Activated CD4-positive, alpha-beta T cell treated with anti-CD3 and anti-CD28 coated beads, Interleukin-2, amount 10 ng/mL, durations not matched to agents 24 days and 14 days (primary cell): ENCODE measurements at regions of chr17 and their contacts with region 1.

Region 1: GRCh38 chr17:48413613-48414405 is 16.2 kb downstream of the SKAP1 start:
- DNase-seq: no peak
- H3K4me3 Mint-ChIP-seq: peak overlapping the region; percentile 55
- H3K27ac Mint-ChIP-seq: peak overlapping the region; percentile 78
- H3K4me1 Mint-ChIP-seq: peaks cover 66% of the 10 kb centered on the region
- H3K27me3 Mint-ChIP-seq: no peaks in the 10 kb centered on the region

Region 2: DNA sequence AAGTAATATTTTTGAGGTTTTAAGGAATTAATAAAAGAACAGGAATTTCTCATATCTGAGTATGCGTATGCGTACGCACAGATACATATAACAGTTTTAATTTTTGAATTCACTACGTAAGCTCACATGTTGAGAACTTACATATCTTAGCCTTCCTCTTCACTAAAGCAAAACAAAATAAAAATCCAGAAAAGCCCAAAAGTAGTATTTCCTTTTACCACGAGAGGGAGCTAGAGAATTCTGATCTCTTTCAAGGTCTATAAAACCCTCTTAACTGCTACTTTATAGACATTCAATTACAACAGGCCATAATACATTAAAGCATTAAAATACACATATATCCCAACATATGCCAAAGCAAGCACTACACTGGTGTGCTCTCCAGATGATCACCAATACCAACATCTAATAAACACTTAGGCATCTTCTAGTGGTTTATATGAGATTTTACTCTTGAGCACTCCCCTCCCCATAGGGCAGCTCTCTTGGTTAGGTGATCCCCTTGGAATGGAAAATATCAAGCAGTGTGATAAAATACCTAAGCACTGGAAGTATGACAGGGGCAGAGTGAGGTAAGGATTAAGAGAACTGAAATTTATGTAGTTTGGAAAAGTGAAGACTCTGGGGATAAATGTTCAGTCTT is 77.8 kb before region 1 on chr17:
- intact Hi-C with region 1: loop called (anchors 1 kb)
- DNase-seq: peak; percentile 72
- H3K4me3 Mint-ChIP-seq: no peak overlapping the region
- H3K27ac Mint-ChIP-seq: no peak overlapping the region
- H3K4me1 Mint-ChIP-seq: peaks cover 12% of the 10 kb centered on the region
- H3K27me3 Mint-ChIP-seq: no peaks in the 10 kb centered on the region

Region 3: GRCh38 chr17:48429638-48430586 is 16.1 kb after region 1 on chr17 and contains the start of gene SKAP1:
- intact Hi-C with region 1: loop called (anchors 1 kb)
- DNase-seq: peak; percentile 93
- H3K4me3 Mint-ChIP-seq: peak within 1 kb of the TSS; percentile 99
- H3K27ac Mint-ChIP-seq: peak within 1 kb of the TSS; percentile 99
- H3K4me1 Mint-ChIP-seq: peaks cover 64% of the 10 kb centered on the region
- H3K27me3 Mint-ChIP-seq: no peaks in the 10 kb centered on the region
- total RNA-seq, gene SKAP1: 59.3 and 63.1 TPM in 2 replicates

Region 4: GRCh38 chr17:48457080-48457836 is 43.4 kb after region 1 on chr17:
- intact Hi-C with region 1: loop called (anchors 2 kb)
- DNase-seq: peak; percentile 93
- H3K4me3 Mint-ChIP-seq: peak overlapping the region; percentile 53
- H3K27ac Mint-ChIP-seq: peak overlapping the region; percentile 17
- H3K4me1 Mint-ChIP-seq: peaks cover 53% of the 10 kb centered on the region
- H3K27me3 Mint-ChIP-seq: no peaks in the 10 kb centered on the region

Region 5: DNA sequence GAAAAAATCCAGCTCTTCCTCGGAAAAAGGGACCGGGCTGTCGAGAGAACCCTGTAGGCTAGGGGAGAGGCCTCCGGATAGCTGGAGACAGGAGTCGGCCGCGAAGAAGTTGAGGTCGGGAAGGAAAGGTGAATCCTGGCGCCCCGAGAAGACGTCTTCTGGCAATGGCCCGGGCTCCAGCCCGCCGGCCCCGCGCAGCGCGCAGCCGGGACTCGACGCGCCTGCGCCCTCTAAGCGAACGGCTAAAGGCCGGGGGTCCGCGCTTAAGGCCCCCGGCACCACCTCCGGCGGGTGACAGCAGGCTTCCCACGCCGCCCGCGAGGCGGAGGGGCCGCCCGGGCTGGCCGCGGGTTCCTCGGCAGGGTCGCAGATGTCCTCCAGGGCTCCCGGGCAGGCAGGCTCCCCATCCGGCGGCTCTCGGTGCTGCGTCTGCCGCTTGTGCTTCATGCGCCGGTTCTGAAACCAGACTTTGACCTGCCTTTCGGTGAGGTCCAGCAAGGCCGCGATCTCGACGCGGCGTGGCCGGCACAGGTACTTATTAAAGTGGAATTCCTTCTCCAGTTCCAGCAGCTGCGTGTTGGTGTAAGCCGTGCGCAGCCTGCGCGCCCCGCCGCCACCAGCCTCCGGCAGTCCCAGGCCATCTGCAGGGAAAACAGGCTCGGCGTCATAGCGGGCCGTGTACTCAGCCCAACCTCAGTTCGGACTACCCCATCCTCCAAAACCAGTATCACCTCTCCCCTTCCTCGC is 129.5 kb after region 1 on chr17:
- intact Hi-C with region 1: loop called (anchors 5 kb)
- DNase-seq: peak; percentile 91
- H3K4me3 Mint-ChIP-seq: peak overlapping the region; percentile 95
- H3K27ac Mint-ChIP-seq: peak overlapping the region; percentile 97
- H3K4me1 Mint-ChIP-seq: peaks cover 47% of the 10 kb centered on the region
- H3K27me3 Mint-ChIP-seq: peaks cover 2% of the 10 kb centered on the region